Activated CD8-positive, alpha-beta T cell treated with anti-CD3 and anti-CD28 coated beads, Interleukin-2, amount 10 ng/mL, durations not matched to agents 7 days and 5 days (primary cell): ENCODE measurements at regions of chr2 and their contacts with region 1.

Region 1: DNA sequence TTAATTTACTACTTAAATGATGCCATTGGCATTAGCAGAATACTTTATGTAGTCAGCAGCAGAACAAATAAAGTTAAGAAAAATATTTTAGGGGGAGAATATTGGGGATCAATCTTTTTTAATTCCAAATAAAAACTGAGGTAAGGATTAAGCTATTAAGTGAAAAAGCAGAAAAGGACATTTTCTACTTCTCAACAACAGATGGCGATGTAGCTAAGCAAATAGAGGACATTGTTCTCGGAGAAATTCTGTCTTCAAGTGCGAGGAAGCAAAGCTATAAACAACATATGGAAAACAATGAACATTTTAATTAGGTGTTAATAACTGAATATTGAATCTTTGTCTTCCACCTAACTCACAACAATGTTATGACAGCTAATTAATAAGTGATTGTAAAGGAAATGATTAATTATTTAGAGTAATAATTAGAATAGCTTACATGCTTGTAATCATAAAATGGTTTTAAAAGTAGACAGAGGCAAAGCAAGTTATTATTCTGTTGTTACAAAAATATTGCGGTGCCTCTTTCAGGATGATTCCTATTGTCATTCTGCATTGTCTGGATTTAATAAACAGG is 32.9 kb upstream of the CCDC93 start:
- DNase-seq: no peak
- ATAC-seq: no peak
- H3K4me3 Mint-ChIP-seq: no peak overlapping the region
- H3K27ac Mint-ChIP-seq: no peak overlapping the region
- H3K4me1 Mint-ChIP-seq: peaks cover 3% of the 10 kb centered on the region
- H3K27me3 Mint-ChIP-seq: peaks cover 44% of the 10 kb centered on the region

Region 2: GRCh38 chr2:117902933-117903332 is 143.8 kb before region 1 on chr2:
- CTCF ChIA-PET with region 1: no interaction called
- POLR2A ChIA-PET with region 1: no interaction called
- DNase-seq: no peak
- ATAC-seq: no peak
- H3K4me3 Mint-ChIP-seq: no peak overlapping the region
- H3K27ac Mint-ChIP-seq: no peak overlapping the region
- H3K4me1 Mint-ChIP-seq: no peaks in the 10 kb centered on the region
- H3K27me3 Mint-ChIP-seq: peaks cover 3% of the 10 kb centered on the region

Region 3: GRCh38 chr2:118061135-118061955 is 14.6 kb after region 1 on chr2:
- CTCF ChIA-PET with region 1: interaction called, 11 read pairs
- POLR2A ChIA-PET with region 1: no interaction called
- DNase-seq: no peak
- ATAC-seq: no peak
- H3K4me3 Mint-ChIP-seq: no peak overlapping the region
- H3K27ac Mint-ChIP-seq: no peak overlapping the region
- H3K4me1 Mint-ChIP-seq: peaks cover 13% of the 10 kb centered on the region
- H3K27me3 Mint-ChIP-seq: peaks cover 34% of the 10 kb centered on the region

Region 4: GRCh38 chr2:118148809-118149208 is 102.1 kb after region 1 on chr2:
- CTCF ChIA-PET with region 1: interaction called, 16 read pairs
- POLR2A ChIA-PET with region 1: no interaction called
- DNase-seq: no peak
- ATAC-seq: no peak
- H3K4me3 Mint-ChIP-seq: no peak overlapping the region
- H3K27ac Mint-ChIP-seq: no peak overlapping the region
- H3K4me1 Mint-ChIP-seq: no peaks in the 10 kb centered on the region
- H3K27me3 Mint-ChIP-seq: peaks cover 14% of the 10 kb centered on the region

Region 5: DNA sequence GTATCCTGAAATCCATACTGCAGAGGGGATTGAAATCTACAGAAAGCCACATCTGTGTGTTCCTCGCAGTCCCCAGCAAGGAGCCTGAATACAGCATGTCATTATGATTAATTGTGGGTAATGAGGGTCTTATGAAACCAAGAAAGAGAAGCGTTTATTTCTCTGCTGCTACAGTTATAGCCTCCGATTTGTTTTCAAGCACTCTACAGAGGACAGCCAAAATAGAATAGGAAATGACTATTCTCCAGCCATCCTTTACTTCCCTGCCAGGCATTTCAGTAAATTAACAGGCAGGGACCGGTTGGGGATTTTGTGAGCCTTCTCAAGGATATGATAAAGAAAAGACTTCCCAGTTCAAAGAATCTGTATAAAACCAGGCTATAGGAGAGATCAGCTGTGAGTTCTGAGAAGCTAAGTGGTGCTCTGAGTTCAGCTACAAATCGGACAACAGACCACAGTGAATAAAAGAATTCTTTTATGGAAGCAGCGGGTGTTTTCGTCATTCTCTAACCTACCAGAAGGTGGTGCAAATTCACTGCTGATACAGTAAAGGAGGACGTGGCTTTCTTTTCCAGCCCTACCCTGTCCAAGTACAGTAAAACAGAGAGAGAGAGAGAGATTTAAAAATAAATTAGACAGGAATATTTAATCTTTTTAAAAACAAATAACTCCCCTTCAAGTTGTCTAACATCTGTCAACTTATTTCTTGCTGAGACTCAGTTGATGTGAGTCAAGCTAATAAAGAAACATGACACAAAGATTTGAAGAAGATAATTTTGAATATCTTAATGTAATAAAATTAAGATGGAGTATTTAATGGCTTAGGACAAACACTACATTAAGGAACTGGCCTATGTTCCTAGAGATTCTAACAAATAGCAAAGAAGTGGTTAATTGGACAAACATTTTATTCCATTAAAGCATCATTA is 175.2 kb after region 1 on chr2:
- CTCF ChIA-PET with region 1: interaction called, 11 read pairs
- POLR2A ChIA-PET with region 1: no interaction called
- DNase-seq: peak; percentile 49
- ATAC-seq: peak; percentile 64
- H3K4me3 Mint-ChIP-seq: no peak overlapping the region
- H3K27ac Mint-ChIP-seq: no peak overlapping the region
- H3K4me1 Mint-ChIP-seq: peaks cover 23% of the 10 kb centered on the region
- H3K27me3 Mint-ChIP-seq: peaks cover 63% of the 10 kb centered on the region

Region 6: GRCh38 chr2:118321432-118322131 is 274.9 kb after region 1 on chr2:
- CTCF ChIA-PET with region 1: no interaction called
- POLR2A ChIA-PET with region 1: no interaction called
- DNase-seq: no peak
- ATAC-seq: no peak
- H3K4me3 Mint-ChIP-seq: no peak overlapping the region
- H3K27ac Mint-ChIP-seq: no peak overlapping the region
- H3K4me1 Mint-ChIP-seq: no peaks in the 10 kb centered on the region
- H3K27me3 Mint-ChIP-seq: peaks cover 32% of the 10 kb centered on the region